HCT116 (cell line): ENCODE measurements at regions of chr16 and their contacts with region 1.

Region 1: GRCh38 chr16:87407511-87408112 is 15.5 kb downstream of the MAP1LC3B start:
- DNase-seq: peak; percentile 100
- ATAC-seq: peak; percentile 93
- H3K4me3 ChIP-seq: peak overlapping the region in 1 of 2 experiments; percentile 24; a peak in 2 of 4 replicates
- H3K27ac ChIP-seq: peak overlapping the region; percentile 12; the same call in 1 of the 2 replicates
- H3K4me1 ChIP-seq: peaks cover 24 to 42% of the 10 kb centered on the region in 2 experiments
- H3K27me3 ChIP-seq: no peaks in the 10 kb centered on the region
- CTCF ChIP-seq: no peak
- POLR2A ChIP-seq: no peak
- RAD21 ChIP-seq: peak; percentile 31; the same call in 1 of the 2 replicates

Region 2: GRCh38 chr16:87387942-87388817 is 19.4 kb before region 1 on chr16:
- CTCF ChIA-PET with region 1: no interaction called
- POLR2A ChIA-PET with region 1: interaction called, 15 read pairs
- RAD21 ChIA-PET with region 1: no interaction called
- intact Hi-C with region 1: no loop called
- DNase-seq: peak; percentile 100
- ATAC-seq: peak; percentile 67
- H3K4me3 ChIP-seq: no peak overlapping the region; a peak in 1 of 4 replicates
- H3K27ac ChIP-seq: peak overlapping the region; percentile 47
- H3K4me1 ChIP-seq: peaks cover 37 to 52% of the 10 kb centered on the region in 2 experiments
- H3K27me3 ChIP-seq: no peaks in the 10 kb centered on the region
- CTCF ChIP-seq: no peak
- POLR2A ChIP-seq: no peak
- RAD21 ChIP-seq: no peak

Region 3: GRCh38 chr16:87393680-87394055 is 13.9 kb before region 1 on chr16:
- CTCF ChIA-PET with region 1: interaction called, 9 read pairs
- POLR2A ChIA-PET with region 1: interaction called, 15 read pairs
- RAD21 ChIA-PET with region 1: no interaction called
- intact Hi-C with region 1: no loop called
- DNase-seq: no peak
- ATAC-seq: no peak
- H3K4me3 ChIP-seq: peak overlapping the region; percentile 72; a peak in 3 of 4 replicates
- H3K27ac ChIP-seq: no peak overlapping the region
- H3K4me1 ChIP-seq: peaks cover 39 to 46% of the 10 kb centered on the region in 2 experiments
- H3K27me3 ChIP-seq: no peaks in the 10 kb centered on the region
- CTCF ChIP-seq: no peak
- POLR2A ChIP-seq: no peak
- RAD21 ChIP-seq: no peak

Region 4: DNA sequence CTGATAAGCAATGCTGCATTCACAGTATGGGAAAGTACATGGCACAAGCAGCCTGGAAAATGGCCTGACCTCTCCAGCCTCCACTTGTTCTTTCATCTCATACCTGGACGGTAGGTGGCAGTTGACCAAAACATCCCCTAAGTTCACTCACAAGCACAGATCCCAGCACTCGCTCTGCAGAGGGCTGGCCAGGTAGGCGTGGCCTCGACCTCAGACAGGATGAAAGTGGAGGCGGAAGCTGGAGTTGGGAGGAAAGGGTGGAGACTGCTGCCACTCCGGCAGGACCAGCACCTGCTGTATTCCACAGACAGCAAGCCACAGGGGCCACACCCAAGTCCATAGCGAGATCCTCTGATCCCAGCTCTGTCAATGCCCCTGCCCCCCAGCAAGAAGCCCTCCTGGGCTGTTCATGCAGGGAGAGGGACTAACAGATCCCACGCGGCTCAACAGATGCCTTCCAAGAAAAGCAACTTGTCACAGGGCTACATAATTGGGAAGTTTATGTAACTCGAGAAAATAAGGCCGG is 53.9 kb after region 1 on chr16:
- CTCF ChIA-PET with region 1: interaction called, 3 read pairs
- POLR2A ChIA-PET with region 1: no interaction called
- RAD21 ChIA-PET with region 1: interaction called in 1 of 2 experiments, 4 read pairs
- intact Hi-C with region 1: loop called (anchors 5 kb)
- DNase-seq: peak; percentile 98
- ATAC-seq: peak; percentile 90
- H3K4me3 ChIP-seq: peak overlapping the region; percentile 35 to 44
- H3K27ac ChIP-seq: no peak overlapping the region
- H3K4me1 ChIP-seq: peaks cover 48 to 61% of the 10 kb centered on the region in 2 experiments
- H3K27me3 ChIP-seq: no peaks in the 10 kb centered on the region
- CTCF ChIP-seq: peak; percentile 73 to 82 (median 79); a peak in 5 of 6 replicates
- POLR2A ChIP-seq: no peak
- RAD21 ChIP-seq: peak; percentile 73